Calu3 (cell line): ENCODE measurements at regions of chr2 and their contacts with region 1.

Region 1: DNA sequence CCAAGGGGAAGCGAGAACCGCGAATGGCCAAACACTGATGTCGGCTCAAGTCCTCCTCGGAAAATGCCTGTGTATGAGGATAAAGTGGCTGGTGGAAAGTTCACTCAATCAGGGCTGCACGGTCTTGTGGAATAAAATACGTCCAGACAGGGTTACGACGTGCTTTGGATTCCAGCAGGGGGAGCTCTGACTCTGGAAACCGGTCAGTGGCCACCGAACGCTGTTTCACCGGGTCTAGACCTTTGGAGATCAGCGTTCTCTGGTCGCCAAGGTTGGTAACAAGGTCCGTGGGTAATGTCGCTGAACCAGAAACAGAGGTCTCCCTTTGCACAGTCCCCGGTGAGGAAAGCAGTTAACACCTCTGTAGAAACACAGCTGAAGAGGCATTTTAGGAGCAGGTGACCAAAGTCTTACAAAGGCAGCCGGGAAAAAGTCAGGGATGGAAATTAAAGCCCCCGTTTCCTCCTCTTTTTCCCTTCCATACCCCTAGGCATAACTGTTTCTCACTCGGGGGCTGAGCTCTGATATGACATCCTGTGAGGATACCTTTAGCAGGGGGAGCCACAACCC is 47.8 kb downstream of the CDCA7 start:
- DNase-seq: peak; percentile 91
- H3K4me3 Mint-ChIP-seq: peak overlapping the region; percentile 67
- H3K27ac Mint-ChIP-seq: peak overlapping the region; percentile 73
- H3K4me1 Mint-ChIP-seq: peaks cover 27% of the 10 kb centered on the region
- H3K27me3 Mint-ChIP-seq: no peaks in the 10 kb centered on the region
- CTCF ChIP-seq: peak; percentile 89

Region 2: DNA sequence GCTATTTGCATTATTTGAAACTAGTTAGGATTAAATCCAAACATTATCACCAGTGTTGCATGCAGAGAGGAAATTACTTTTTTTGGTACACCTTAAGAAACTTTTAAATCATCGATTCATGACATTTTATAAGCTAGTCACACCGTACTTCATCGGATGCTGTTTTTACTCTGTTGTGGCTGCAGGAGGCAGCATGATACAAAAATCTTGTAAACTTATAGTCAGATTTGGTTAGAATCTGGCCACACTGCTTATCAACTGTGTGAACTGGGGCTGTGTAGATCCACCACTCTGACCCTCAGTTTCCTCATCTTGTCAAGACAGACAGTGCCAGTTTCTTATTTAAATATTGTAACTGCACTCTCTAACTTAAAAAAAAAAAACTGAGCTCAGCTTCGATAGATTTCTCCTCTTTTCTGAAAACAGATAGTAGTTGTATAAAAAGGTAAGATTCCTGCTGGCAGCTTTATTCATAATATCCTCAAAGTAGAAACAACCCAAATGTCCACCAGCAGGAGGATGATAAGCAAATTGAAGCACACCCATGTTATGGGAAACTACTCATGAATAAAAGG is 589.1 kb before region 1 on chr2:
- CTCF ChIA-PET with region 1: no interaction called
- intact Hi-C with region 1: loop called (anchors 5 kb)
- DNase-seq: no peak
- H3K4me3 Mint-ChIP-seq: no peak overlapping the region
- H3K27ac Mint-ChIP-seq: no peak overlapping the region
- H3K4me1 Mint-ChIP-seq: no peaks in the 10 kb centered on the region
- H3K27me3 Mint-ChIP-seq: peaks cover 25% of the 10 kb centered on the region
- CTCF ChIP-seq: peak; percentile 32

Region 3: DNA sequence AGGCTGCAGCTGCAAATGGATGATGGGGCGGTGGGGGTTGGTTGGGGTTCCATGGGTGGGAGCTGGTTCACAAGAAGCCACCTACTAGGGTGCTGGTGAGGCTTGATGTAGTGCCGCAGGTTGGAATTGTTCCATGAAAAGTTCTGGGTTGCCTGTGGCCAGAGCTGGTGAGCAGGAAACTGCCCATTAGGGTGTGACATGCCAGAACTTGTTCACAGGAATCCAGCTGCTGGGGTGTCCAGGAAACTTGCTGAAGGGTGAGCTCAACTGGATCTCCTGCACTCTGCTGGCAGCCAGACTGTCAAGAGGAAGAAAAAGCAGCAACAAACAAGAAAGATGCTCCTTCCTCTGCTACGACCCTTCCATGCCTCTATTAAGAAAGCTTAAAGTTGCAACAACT is 278.0 kb before region 1 on chr2:
- CTCF ChIA-PET with region 1: no interaction called
- intact Hi-C with region 1: no loop called
- DNase-seq: no peak
- H3K4me3 Mint-ChIP-seq: no peak overlapping the region
- H3K27ac Mint-ChIP-seq: no peak overlapping the region
- H3K4me1 Mint-ChIP-seq: no peaks in the 10 kb centered on the region
- H3K27me3 Mint-ChIP-seq: no peaks in the 10 kb centered on the region
- CTCF ChIP-seq: no peak

Region 4: DNA sequence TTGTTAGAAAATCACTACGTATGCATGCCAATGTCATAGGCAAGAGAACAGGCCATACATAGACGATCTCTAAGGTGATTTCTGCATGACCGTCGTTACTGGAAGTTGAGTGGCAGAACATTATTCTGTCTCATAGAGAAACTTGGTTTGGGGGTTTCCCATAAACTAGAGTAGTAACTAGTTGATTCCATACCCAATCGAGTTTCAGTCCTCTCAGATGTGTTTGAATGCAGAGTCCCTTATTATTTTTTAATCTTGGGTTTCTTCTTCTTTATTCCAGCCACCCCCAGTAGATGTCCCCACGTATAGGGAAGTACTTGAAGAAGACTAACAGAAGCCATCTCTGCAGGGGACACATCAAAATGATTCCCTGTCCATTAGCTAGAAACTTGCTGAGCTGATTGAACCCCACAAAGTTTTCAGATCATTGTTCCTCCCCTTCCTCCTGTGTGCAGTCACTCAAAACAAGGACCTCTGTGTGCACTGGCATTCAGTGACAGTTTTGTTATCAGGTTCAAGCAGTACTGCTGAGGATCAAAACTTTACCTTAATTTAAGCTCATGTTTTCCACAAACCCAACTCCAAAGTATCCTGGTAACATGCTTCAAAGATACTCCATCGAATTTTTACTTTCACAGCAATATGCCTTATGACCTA is 116.2 kb before region 1 on chr2:
- CTCF ChIA-PET with region 1: interaction called, 5 read pairs
- intact Hi-C with region 1: loop called (anchors 2 kb)
- DNase-seq: peak; percentile 16
- H3K4me3 Mint-ChIP-seq: no peak overlapping the region
- H3K27ac Mint-ChIP-seq: no peak overlapping the region
- H3K4me1 Mint-ChIP-seq: no peaks in the 10 kb centered on the region
- H3K27me3 Mint-ChIP-seq: no peaks in the 10 kb centered on the region
- CTCF ChIP-seq: peak; percentile 17

Region 5: GRCh38 chr2:173431191-173431590 is 28.7 kb after region 1 on chr2:
- CTCF ChIA-PET with region 1: no interaction called
- intact Hi-C with region 1: no loop called
- DNase-seq: no peak
- H3K4me3 Mint-ChIP-seq: no peak overlapping the region
- H3K27ac Mint-ChIP-seq: no peak overlapping the region
- H3K4me1 Mint-ChIP-seq: peaks cover 37% of the 10 kb centered on the region
- H3K27me3 Mint-ChIP-seq: no peaks in the 10 kb centered on the region
- CTCF ChIP-seq: no peak

Region 6: GRCh38 chr2:173571021-173571882 is 168.8 kb after region 1 on chr2:
- CTCF ChIA-PET with region 1: interaction called, 24 read pairs
- intact Hi-C with region 1: no loop called
- DNase-seq: peak; percentile 34
- H3K4me3 Mint-ChIP-seq: peak overlapping the region; percentile 59
- H3K27ac Mint-ChIP-seq: peak overlapping the region; percentile 78
- H3K4me1 Mint-ChIP-seq: peaks cover 54% of the 10 kb centered on the region
- H3K27me3 Mint-ChIP-seq: no peaks in the 10 kb centered on the region
- CTCF ChIP-seq: peak; percentile 75

Region 7: GRCh38 chr2:173749315-173749714 is 346.8 kb after region 1 on chr2:
- CTCF ChIA-PET with region 1: no interaction called
- intact Hi-C with region 1: loop called (anchors 2 kb)
- DNase-seq: no peak
- H3K4me3 Mint-ChIP-seq: no peak overlapping the region
- H3K27ac Mint-ChIP-seq: no peak overlapping the region
- H3K4me1 Mint-ChIP-seq: no peaks in the 10 kb centered on the region
- H3K27me3 Mint-ChIP-seq: no peaks in the 10 kb centered on the region
- CTCF ChIP-seq: no peak